Left ventricle myocardium superior (tissue), 1 donor: ENCODE measurements at regions of chr9 and their contacts with region 1.

Region 1: GRCh38 chr9:34332076-34332964 is 3.0 kb downstream of the NUDT2 start:
- DNase-seq: no peak
- ATAC-seq: no peak

Region 2: DNA sequence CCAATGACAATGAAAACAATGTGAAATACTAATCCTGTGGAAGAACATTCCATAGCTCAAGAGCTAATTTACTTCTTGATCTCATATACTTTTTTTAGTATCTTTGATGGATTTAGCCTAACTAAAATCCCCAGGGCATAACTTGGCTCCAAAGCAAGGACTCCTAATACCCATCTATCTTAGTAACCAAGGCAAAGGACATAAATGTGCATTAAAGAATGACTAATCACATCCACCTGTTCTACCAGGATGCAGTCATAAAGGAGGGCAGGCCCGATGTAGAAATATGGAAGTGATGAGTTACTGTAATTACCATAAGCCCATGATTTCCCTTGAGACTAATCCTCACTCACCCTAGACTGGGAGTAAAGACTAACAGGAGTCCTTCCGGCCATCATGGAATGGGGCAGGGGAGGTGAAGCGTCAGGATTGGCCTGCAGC is 60.2 kb before region 1 on chr9:
- intact Hi-C with region 1: no loop called
- DNase-seq: no peak
- ATAC-seq: no peak

Region 3: GRCh38 chr9:34376596-34377403 is 44.5 kb after region 1 on chr9 and contains the start of gene MYORG:
- intact Hi-C with region 1: loop called (anchors 5 kb)
- DNase-seq: peak; percentile 96
- ATAC-seq: peak; percentile 80
- total RNA-seq, gene MYORG: 5.3 TPM

Region 4: GRCh38 chr9:34403554-34404380 is 71.4 kb after region 1 on chr9:
- intact Hi-C with region 1: no loop called
- DNase-seq: peak; percentile 67
- ATAC-seq: peak; percentile 63

Region 5: DNA sequence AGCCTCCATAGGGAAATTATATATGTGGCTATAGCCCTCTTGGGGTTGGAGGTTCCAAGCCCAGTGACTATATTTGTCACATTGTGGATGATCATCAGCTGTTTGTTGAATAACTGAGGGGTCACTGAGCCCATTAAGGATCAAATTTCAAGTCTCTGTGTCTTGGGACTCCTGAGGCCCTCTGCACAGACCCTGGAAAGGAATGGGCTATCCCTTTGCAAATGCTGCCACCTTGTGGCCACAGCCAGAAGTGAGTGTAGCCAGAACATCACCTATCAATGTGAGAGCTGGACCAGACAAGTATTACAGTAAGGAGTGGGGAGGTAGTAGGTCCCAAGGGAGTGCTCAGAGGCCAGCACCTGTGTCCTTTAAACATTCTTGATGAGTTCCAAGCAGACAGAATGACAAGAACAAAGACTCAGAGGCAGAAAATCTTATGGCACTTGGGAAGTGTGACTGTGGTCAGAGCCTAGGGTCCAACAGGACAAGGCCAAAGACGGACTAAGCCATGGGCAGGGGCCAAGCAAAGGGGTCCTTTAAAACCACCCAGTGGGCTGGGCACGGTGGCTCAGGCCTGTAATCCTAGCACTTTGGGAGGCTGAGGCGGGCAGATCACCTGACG is 271.4 kb after region 1 on chr9:
- intact Hi-C with region 1: loop called (anchors 10 kb)
- DNase-seq: peak; percentile 90
- ATAC-seq: peak; percentile 91